CD4-positive, alpha-beta memory T cell (primary cell): ENCODE measurements at regions of chr1 and their contacts with region 1.

Region 1: GRCh38 chr1:203649999-203650855 is 23.6 kb downstream of the ATP2B4 start:
- DNase-seq: peak; percentile 59 to 95 (median 67)
- H3K4me3 ChIP-seq: peak overlapping the region; percentile 13 to 54
- H3K4me3 Mint-ChIP-seq: peak overlapping the region; percentile 82 to 93 (median 88)
- H3K27ac ChIP-seq: peak overlapping the region; percentile 78
- H3K27ac Mint-ChIP-seq: peak overlapping the region; percentile 96 to 99 (median 98)
- H3K4me1 ChIP-seq: peaks cover 74% of the 10 kb centered on the region
- H3K4me1 Mint-ChIP-seq: peaks cover 50 to 81% (median 68%) of the 10 kb centered on the region in 4 donors
- H3K27me3 ChIP-seq: no peaks in the 10 kb centered on the region
- H3K27me3 Mint-ChIP-seq: no peaks in the 10 kb centered on the region

Region 2: GRCh38 chr1:203278082-203278884 is 371.9 kb before region 1 on chr1:
- CTCF ChIA-PET with region 1: no interaction called
- POLR2A ChIA-PET with region 1: no interaction called
- intact Hi-C with region 1: no loop called
- DNase-seq: peak in 4 of 5 donors; percentile 27 to 57 (median 36)
- H3K4me3 ChIP-seq: no peak overlapping the region
- H3K4me3 Mint-ChIP-seq: peak overlapping the region; percentile 4 to 78 (median 42)
- H3K27ac ChIP-seq: peak overlapping the region; percentile 11
- H3K27ac Mint-ChIP-seq: peak overlapping the region; percentile 60 to 96 (median 87)
- H3K4me1 ChIP-seq: peaks cover 37% of the 10 kb centered on the region
- H3K4me1 Mint-ChIP-seq: peaks cover 25 to 58% (median 43%) of the 10 kb centered on the region in 4 donors
- H3K27me3 ChIP-seq: no peaks in the 10 kb centered on the region
- H3K27me3 Mint-ChIP-seq: no peaks in the 10 kb centered on the region

Region 3: DNA sequence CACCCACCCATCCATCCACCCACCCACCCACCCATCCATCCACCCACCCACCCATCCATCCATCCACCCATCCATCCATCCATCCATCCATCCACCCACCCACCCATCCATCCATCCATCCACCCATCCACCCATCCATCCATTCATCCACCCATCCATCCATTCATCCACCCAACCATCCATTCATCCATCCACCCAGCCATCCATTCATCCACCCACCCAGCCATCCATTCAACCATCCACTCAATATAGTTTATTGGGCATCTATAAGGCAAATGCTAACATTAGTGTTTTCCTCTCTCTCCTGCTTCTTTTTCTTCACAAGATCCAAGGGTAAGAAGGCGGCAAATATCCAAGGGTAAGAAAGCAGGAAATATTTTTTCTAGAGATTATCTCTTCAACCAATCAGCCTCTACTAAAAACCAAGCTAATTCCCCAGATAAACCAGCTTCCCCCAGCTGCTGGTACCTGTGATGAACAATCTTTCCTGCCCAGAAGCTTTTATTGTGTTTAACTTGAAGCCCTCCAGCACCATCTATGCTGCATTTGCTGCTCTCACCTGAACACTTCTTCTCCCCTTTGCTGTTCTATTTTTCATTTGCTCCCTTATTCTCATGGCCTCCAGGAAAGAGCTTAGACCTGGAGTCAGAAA is 46.2 kb before region 1 on chr1:
- CTCF ChIA-PET with region 1: interaction called, 5 read pairs
- POLR2A ChIA-PET with region 1: interaction called, 18 read pairs
- intact Hi-C with region 1: loop called (anchors 1 kb)
- DNase-seq: no peak
- H3K4me3 ChIP-seq: no peak overlapping the region
- H3K4me3 Mint-ChIP-seq: peak overlapping the region in 1 of 8 donors; percentile 37
- H3K27ac ChIP-seq: no peak overlapping the region
- H3K27ac Mint-ChIP-seq: peak overlapping the region in 5 of 7 donors; percentile 23 to 69 (median 61)
- H3K4me1 ChIP-seq: peaks cover 49% of the 10 kb centered on the region
- H3K4me1 Mint-ChIP-seq: peaks cover 33 to 55% (median 42%) of the 10 kb centered on the region in 4 donors
- H3K27me3 ChIP-seq: no peaks in the 10 kb centered on the region
- H3K27me3 Mint-ChIP-seq: no peaks in the 10 kb centered on the region

Region 4: DNA sequence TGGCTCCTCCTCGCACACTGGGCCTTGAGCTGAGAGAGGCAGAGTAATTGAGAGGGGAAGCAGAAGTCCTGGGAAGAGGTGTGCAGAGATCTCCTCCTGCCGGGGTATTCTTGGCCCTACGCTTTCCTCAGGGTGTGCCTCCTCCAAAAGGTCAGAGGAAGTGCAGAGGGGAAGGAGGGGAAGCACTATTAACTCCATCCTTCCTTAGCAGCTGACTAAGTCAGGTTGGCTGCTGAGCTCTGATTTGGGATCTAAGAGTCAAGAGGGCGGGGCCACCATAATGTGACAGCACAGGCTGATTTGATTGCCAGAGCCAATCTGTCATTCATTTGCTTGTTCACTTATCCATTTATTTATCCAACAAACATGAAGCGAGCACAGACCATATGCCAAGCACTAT is 11.3 kb before region 1 on chr1:
- CTCF ChIA-PET with region 1: interaction called, 5 read pairs
- POLR2A ChIA-PET with region 1: interaction called, 27 read pairs
- intact Hi-C with region 1: no loop called
- DNase-seq: no peak
- H3K4me3 ChIP-seq: no peak overlapping the region
- H3K4me3 Mint-ChIP-seq: peak overlapping the region in 7 of 8 donors; percentile 64 to 85 (median 73)
- H3K27ac ChIP-seq: peak overlapping the region; percentile 28
- H3K27ac Mint-ChIP-seq: peak overlapping the region; percentile 44 to 90 (median 84)
- H3K4me1 ChIP-seq: peaks cover 88% of the 10 kb centered on the region
- H3K4me1 Mint-ChIP-seq: peaks cover 63 to 89% (median 74%) of the 10 kb centered on the region in 4 donors
- H3K27me3 ChIP-seq: no peaks in the 10 kb centered on the region
- H3K27me3 Mint-ChIP-seq: no peaks in the 10 kb centered on the region

Region 5: GRCh38 chr1:203663294-203663693 is 13.1 kb after region 1 on chr1:
- CTCF ChIA-PET with region 1: interaction called, 78 read pairs
- POLR2A ChIA-PET with region 1: interaction called, 12 read pairs
- intact Hi-C with region 1: loop called (anchors 1 kb)
- DNase-seq: peak in 1 of 5 donors; percentile 52
- H3K4me3 ChIP-seq: no peak overlapping the region
- H3K4me3 Mint-ChIP-seq: peak overlapping the region in 7 of 8 donors; percentile 43 to 74 (median 69)
- H3K27ac ChIP-seq: peak overlapping the region; percentile 33
- H3K27ac Mint-ChIP-seq: peak overlapping the region; percentile 79 to 95 (median 85)
- H3K4me1 ChIP-seq: peaks cover 74% of the 10 kb centered on the region
- H3K4me1 Mint-ChIP-seq: peaks cover 56 to 79% (median 68%) of the 10 kb centered on the region in 4 donors
- H3K27me3 ChIP-seq: no peaks in the 10 kb centered on the region
- H3K27me3 Mint-ChIP-seq: no peaks in the 10 kb centered on the region

Region 6: DNA sequence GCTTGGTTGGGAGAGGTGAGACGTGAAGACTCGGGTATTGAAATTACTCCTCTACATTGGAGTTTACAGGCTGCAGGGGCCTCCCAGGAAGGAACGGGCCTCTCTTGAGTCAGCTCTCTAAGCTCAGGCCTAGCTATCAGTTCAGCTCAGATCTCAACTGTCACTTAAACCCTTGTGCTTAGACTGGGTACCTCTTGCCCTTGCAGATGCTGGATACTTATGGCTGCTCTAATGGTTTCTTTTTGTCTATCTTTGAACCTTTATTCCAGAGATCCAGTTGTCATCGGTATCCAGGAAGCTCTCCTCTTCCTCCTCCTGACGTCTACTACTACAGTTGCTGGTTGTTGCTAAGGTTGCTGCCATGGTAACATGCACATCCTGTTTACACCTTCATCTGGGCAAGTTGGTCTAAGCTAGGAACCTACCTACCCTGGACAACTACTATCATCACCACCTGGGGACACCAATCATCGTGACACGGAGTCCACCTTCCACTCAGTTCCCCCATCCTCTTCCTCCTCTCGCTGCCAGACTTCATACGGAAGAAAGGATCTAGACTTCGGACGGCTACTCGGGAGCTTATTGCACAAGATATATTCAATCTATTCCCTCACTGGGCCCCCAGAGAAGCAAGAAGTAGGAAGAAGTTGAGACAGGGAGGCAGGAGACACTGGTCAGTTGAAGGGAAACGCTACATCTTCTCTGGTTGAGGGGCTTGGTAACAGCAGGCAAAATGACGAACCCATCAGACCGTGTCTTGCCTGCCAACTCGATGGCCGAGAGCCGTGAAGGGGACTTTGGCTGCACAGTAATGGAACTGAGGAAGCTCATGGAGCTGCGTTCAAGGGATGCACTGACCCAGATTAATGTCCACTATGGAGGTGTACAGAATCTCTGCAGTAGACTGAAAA is 32.5 kb after region 1 on chr1:
- CTCF ChIA-PET with region 1: interaction called, 8 read pairs
- POLR2A ChIA-PET with region 1: interaction called, 31 read pairs
- intact Hi-C with region 1: no loop called
- DNase-seq: peak; percentile 85 to 93 (median 90)
- H3K4me3 ChIP-seq: peak overlapping the region in 1 of 2 donors; percentile 12
- H3K4me3 Mint-ChIP-seq: peak overlapping the region; percentile 39 to 73 (median 63)
- H3K27ac ChIP-seq: peak overlapping the region; percentile 74
- H3K27ac Mint-ChIP-seq: peak overlapping the region; percentile 89 to 99 (median 98)
- H3K4me1 ChIP-seq: peaks cover 73% of the 10 kb centered on the region
- H3K4me1 Mint-ChIP-seq: peaks cover 47 to 77% (median 62%) of the 10 kb centered on the region in 4 donors
- H3K27me3 ChIP-seq: no peaks in the 10 kb centered on the region
- H3K27me3 Mint-ChIP-seq: no peaks in the 10 kb centered on the region